Thyroid gland (tissue), 4 donors: ENCODE measurements at regions of chr10 and their contacts with region 1.

Region 1: GRCh38 chr10:30027057-30028005 is 32.1 kb downstream of the JCAD start:
- DNase-seq: peak; percentile 95
- H3K4me3 ChIP-seq: peak overlapping the region in 1 of 3 donors; percentile 18
- H3K27ac ChIP-seq: peak overlapping the region; percentile 84 to 94 (median 89)
- H3K4me1 ChIP-seq: peaks cover 39 to 48% of the 10 kb centered on the region in 2 donors
- H3K27me3 ChIP-seq: no peaks in the 10 kb centered on the region
- CTCF ChIP-seq: peak in 5 of 6 experiments; percentile 12 to 79 (median 56)
- POLR2A ChIP-seq: peak in 1 of 2 donors; percentile 44

Region 2: GRCh38 chr10:29881336-29881771 is 146.0 kb before region 1 on chr10:
- intact Hi-C with region 1: no loop called
- DNase-seq: no peak
- H3K4me3 ChIP-seq: no peak overlapping the region
- H3K27ac ChIP-seq: peak overlapping the region in 1 of 3 donors; percentile 11
- H3K4me1 ChIP-seq: peaks cover 23 to 24% of the 10 kb centered on the region in 2 donors
- H3K27me3 ChIP-seq: no peaks in the 10 kb centered on the region
- CTCF ChIP-seq: no peak
- POLR2A ChIP-seq: no peak

Region 3: DNA sequence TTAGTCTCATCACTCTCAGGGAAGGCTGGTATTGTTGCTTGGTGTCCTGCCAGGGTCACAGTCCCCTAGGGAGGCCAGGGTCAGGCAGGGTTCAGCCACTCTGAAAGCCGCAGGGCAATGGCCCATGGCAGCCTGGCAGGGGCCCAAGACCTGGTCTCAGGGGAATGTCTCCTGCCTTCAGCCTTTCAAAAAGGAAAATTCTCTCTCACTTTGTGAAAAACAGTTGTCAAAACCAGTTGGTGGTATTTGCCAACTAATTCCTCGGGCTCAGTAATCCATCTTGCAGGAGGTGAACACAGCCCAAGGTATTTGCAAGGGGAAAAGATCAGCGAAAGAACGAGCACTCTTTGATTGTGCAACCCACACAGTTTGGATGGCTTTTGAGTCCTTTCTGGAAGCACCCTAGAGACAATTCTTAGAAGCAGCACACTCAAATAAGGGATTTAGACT is 69.4 kb before region 1 on chr10:
- intact Hi-C with region 1: no loop called
- DNase-seq: peak; percentile 99
- H3K4me3 ChIP-seq: no peak overlapping the region
- H3K27ac ChIP-seq: peak overlapping the region; percentile 77 to 98 (median 91)
- H3K4me1 ChIP-seq: peaks cover 37 to 45% of the 10 kb centered on the region in 2 donors
- H3K27me3 ChIP-seq: no peaks in the 10 kb centered on the region
- CTCF ChIP-seq: no peak
- POLR2A ChIP-seq: no peak

Region 4: DNA sequence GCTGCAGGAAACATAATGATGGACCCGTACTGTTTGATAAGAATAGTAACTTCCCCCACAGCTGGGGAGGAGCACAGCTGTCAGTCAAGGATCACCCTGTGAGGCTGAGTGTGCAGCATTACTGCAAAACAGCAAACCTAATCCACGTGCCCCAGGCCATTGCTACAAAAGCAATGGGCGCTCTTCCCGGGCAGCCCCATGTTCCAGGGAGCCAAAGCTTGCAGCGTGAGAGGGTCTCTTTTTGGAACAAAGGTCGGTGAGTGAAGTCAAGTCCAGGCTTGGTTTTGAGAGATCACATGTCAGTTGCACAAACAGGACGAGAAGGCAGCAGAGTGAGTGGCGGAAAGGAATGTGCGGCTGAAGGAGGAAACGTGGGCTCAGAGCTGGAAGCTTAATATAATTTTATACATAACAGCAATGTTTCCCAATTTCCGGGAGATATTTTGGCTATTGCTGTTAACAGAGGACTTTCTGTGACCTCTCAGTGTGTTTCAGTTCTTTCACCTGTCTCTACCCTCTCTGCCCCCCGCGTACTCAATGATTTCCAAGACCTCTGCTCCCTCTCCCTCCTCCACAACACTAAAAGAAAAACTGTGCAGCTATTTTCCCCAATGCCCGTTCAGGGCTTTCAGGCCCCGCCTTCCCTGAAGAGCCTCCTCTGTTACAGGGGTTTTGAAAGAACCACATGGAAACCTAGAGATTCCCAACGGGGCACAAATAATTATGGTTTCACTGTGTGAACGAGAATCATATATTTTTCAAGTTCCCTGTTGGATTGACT is 192.8 kb after region 1 on chr10:
- intact Hi-C with region 1: loop called (anchors 10 kb)
- DNase-seq: peak; percentile 74 to 80
- H3K4me3 ChIP-seq: no peak overlapping the region
- H3K27ac ChIP-seq: peak overlapping the region; percentile 84 to 93 (median 89)
- H3K4me1 ChIP-seq: peaks cover 28 to 35% of the 10 kb centered on the region in 2 donors
- H3K27me3 ChIP-seq: no peaks in the 10 kb centered on the region
- CTCF ChIP-seq: no peak
- POLR2A ChIP-seq: peak in 1 of 2 donors; percentile 27